Esophagus squamous epithelium (tissue), 5 donors: ENCODE measurements at regions of chr5 and their contacts with region 1.

Region 1: GRCh38 chr5:168219515-168220410 is 71.7 kb upstream of the WWC1 start:
- DNase-seq: no peak
- H3K4me3 ChIP-seq: no peak overlapping the region
- H3K27ac ChIP-seq: no peak overlapping the region
- H3K4me1 ChIP-seq: peaks cover 0 to 6% (median 3%) of the 10 kb centered on the region in 3 donors
- H3K27me3 ChIP-seq: no peaks in the 10 kb centered on the region
- CTCF ChIP-seq: peak; percentile 74 to 90 (median 87)
- POLR2A ChIP-seq: no peak

Region 2: DNA sequence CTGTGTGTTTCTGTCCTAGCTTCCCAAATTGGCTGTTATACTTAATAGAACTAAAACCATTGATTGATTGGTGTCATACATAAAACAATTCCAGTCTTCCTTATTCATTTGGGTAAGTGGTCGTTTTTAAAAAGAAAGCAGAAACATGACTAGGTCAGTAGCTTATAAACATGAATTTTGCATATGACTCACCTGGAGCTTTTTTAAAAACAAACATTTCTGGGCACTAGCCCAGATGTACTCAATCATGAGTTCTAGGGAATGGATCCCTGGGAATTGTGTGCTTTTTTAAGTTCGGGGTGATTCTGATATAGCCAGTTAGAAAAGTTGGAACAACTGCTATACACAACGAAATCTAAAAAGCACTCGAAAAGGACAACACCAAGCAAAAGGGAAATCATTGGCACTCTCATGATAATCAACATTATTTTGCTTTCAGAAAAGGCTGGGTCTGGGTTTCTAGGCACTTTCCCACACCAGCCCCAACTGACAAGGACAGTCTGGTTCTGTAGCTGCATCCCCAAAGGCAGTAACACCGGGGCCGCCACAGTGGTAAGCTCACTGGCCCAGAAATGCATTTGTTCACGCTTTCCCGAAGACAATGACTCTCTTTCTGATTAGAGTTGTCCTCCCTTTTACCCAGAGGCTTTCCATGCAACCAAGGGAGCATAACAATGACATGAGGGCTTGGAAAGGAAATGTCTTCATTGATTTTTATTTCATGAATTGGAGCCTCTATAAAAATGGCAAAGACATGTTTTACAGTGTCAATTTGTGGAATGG is 593.2 kb before region 1 on chr5:
- intact Hi-C with region 1: no loop called
- DNase-seq: no peak
- H3K4me3 ChIP-seq: no peak overlapping the region
- H3K27ac ChIP-seq: no peak overlapping the region
- H3K4me1 ChIP-seq: peaks cover 0 to 3% (median 0%) of the 10 kb centered on the region in 3 donors
- H3K27me3 ChIP-seq: no peaks in the 10 kb centered on the region
- CTCF ChIP-seq: no peak
- POLR2A ChIP-seq: no peak

Region 3: DNA sequence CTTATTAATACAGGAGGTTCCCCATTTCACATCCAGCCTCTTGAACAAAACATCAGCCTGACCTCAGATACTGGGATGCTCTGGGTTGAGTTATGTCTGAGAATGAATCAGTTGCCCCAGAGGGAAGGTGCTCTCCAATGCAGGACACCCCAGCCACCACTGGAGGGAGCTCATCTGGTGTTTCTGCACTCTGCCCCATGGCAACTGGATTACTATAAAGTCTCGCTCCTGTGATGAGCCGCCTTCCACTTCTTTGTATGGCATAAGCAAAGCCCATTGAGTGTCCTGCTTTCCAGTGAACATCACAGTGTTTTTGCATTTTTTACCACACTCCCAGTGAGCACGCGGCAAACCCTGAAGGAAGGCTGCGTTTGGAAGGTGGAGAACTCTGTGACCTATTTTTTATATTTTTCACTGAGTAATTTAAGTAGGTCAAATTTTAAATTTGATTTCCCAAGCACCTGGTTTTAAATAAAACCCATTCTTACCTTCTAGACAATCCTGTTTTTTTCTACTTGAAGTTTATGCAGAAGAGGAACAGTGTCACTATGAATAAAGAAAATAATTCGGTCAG is 105.2 kb before region 1 on chr5:
- intact Hi-C with region 1: loop called (anchors 5 kb)
- DNase-seq: no peak
- H3K4me3 ChIP-seq: no peak overlapping the region
- H3K27ac ChIP-seq: no peak overlapping the region
- H3K4me1 ChIP-seq: no peaks in the 10 kb centered on the region
- H3K27me3 ChIP-seq: no peaks in the 10 kb centered on the region
- CTCF ChIP-seq: peak in 5 of 6 experiments; percentile 46 to 77 (median 58)
- POLR2A ChIP-seq: no peak

Region 4: DNA sequence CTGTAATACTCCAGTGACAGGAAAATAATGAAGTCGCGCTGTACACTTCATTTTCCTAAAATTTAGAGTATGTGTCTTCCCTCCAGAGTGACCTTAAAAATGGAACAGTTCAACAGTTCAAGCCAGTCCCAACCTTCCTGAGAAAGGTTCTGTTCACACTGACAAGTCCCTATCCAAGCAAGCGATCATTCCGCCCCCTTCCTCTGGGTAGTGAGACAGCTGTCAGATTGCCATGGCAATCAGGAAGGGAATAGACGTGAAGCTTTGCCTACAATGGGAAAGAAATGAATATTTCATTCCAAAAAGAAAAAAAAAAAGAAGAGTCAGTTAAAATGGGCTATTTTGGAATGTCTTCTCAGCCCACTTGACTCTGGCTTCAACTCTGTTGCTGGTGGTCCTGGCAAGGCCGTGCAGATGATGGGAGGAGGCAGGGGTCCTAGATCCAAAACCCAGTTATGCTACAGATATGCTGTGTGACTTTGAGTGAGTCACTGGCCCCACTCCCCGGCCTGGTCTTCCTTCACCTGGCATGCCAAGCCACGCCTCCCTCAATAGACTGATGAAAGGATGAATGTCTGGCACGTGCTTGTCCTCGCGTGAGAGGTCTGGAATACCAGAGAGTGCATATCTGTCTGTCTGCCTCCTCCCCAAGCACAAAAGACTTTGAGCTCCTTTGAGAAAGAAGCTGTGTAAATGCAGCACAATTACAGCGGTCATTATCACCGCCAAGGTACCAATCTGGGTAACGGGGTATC is 94.1 kb before region 1 on chr5:
- intact Hi-C with region 1: no loop called
- DNase-seq: no peak
- H3K4me3 ChIP-seq: no peak overlapping the region
- H3K27ac ChIP-seq: no peak overlapping the region
- H3K4me1 ChIP-seq: peaks cover 0 to 5% (median 4%) of the 10 kb centered on the region in 3 donors
- H3K27me3 ChIP-seq: no peaks in the 10 kb centered on the region
- CTCF ChIP-seq: no peak
- POLR2A ChIP-seq: no peak

Region 5: DNA sequence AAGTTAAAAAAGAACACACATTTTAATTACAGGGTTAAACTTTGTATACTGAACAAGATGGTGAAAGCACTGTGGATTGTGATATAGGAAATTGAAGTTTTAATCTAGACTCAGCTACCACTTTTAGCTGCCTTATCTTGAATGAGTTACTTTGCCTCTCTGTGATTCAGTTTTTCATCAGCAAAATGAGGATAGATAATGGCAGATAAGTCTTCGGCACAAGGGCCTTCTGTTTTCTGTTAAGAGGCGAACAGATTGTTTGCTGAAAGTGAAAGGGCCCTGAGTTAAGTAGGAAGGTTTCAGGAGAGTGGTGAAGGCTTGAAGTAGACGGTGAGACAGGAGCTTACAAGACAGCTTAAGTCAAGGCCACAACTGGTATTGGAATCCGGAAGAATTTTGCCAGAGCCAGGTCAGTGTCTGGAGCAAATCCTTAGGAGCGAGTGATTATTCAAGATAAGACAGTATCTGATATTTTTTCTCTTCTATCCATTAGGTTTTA is 274.3 kb after region 1 on chr5:
- intact Hi-C with region 1: no loop called
- DNase-seq: no peak
- H3K4me3 ChIP-seq: no peak overlapping the region
- H3K27ac ChIP-seq: no peak overlapping the region
- H3K4me1 ChIP-seq: no peaks in the 10 kb centered on the region
- H3K27me3 ChIP-seq: no peaks in the 10 kb centered on the region
- CTCF ChIP-seq: no peak
- POLR2A ChIP-seq: no peak